ENCODE measurements at regions of chr5 and their contacts with region 1.

Region 1: GRCh38 chr5:150700594-150701293 is at the start of gene RBM22:
- DNase-seq: peak; percentile 95
- total RNA-seq, gene RBM22: 33.8 TPM

Region 2: DNA sequence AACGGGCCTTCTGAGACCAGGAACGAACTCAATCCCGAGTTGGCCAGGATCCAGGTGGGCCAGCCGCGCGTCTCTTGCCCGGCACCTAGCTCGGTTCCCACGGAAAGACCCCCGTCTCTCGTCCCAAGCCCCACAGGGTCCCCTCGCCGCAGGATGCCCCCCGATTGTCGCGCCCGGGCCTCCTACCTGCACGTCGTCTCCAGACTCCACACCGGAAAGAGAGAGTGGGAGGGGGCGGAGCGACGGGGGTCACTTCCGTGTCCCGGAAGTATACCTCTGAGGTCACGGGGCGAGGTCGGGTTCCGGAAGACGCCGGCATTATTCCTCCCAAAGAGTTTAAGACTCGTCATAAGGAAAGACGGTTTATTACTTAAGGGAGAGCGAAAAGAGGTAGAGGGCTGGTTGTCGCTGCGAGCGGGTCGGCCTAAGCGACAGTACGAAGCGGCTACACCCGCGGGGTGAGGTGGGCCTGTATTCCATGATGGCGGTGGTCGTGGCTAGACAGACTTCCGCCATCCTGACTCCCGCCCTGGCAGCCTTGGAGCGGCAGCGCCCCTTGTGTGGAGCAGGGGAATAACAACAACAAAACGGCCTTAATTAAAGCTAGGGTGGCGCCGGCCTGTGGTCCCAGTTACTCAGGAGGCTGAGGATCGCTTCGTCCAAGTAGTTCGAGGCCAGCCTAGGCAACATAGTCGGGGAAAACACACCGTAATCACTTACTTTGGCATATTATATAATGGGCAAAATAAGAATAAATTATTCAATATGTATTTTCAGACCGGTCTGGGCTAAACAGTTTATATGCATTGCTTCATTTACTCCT is 251.0 kb before region 1 on chr5 and contains the start of gene RPS14:
- intact Hi-C with region 1: loop called (anchors 5 kb)
- DNase-seq: peak; percentile 96
- total RNA-seq, gene RPS14: 852 TPM

Region 3: GRCh38 chr5:150560401-150561193 is 140.1 kb before region 1 on chr5:
- intact Hi-C with region 1: loop called (anchors 2 kb)
- DNase-seq: no peak

Region 4: DNA sequence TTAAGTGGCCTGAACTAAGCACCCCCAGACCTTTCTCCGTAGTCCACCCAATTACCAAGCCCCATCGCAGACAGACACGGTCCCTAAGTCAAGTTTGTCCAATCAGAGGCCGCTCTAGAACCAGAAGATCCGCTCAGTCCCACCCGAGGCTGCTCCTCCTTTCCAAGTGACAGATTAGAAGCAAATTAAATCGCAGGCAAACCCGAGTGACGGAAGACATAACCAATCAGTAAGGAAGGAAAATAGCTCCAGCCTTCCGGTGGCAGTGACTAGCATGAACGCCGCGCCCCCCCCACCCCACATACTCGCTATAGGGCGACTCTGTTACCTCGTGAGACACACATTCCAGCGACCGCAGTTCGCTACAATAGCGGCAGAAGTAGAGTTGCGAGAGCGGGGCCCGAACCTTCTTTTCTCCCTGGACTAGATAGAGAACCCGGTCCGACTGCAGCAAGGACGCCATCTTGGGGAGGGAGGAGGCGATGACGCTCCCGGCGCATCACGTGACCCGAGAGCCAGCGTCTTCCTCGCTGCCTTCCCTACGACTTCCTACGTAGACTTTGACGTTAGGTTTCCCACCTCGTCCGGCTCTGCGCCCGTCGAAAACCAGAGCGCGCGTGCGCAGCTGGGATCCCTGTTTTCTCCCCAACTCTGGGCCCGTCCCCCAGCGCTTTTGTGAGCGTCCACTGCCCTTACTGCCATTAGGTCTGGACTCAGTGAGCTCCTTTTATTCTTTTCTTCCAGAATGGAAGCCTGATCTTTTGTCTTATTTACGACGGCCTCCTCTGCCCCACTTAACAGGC is 58.0 kb after region 1 on chr5 and contains the start of gene DCTN4:
- intact Hi-C with region 1: loop called (anchors 5 kb)
- DNase-seq: peak; percentile 98
- total RNA-seq, gene DCTN4: 44.9 TPM

Region 5: DNA sequence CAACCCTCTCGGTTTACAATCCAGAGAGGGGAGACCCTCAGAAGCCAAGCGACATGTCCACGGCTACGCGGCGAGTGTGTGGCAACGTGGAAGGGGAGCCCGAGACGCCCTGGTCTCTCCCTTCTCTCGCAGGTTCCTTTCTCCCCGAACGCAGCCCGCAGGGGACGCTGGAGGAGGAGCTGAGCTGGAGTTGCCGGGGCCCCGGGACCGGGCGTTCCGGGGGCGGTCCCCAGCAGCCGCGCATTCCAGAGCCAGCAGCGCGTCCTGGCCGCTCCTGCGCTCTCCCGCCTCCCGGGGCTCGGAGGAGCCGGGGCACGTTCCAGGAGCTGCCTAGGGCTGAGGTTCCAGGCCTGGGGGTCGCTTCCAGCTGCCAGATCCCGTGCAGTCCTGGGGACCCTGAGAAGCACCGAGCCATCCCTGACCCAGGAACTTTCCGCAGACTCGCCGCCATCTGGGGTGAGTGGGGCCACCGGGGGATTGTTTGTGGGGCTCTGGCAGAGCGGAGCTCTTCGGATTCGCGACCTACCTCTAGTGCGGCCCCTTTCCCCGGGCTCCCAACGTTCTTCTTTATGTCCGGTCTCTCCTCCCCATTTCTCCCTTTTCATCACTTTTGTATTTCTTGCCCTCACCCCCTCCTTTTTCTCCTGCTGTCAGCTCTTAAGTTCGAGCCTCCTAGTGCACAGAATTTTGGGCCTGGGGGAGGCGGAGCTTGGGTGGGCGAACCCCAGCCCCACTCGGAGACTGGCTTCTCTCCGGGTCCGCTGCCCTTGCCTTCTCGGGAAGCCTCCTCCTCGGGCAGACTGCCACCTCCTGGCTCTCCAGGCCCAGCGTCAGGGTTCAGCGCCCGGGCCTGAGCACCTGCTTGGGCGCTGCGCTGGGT is 78.0 kb after region 1 on chr5 and contains the start of gene SMIM3:
- intact Hi-C with region 1: loop called (anchors 2 kb)
- DNase-seq: peak; percentile 93
- total RNA-seq, gene SMIM3: 15.3 TPM

Region 6: DNA sequence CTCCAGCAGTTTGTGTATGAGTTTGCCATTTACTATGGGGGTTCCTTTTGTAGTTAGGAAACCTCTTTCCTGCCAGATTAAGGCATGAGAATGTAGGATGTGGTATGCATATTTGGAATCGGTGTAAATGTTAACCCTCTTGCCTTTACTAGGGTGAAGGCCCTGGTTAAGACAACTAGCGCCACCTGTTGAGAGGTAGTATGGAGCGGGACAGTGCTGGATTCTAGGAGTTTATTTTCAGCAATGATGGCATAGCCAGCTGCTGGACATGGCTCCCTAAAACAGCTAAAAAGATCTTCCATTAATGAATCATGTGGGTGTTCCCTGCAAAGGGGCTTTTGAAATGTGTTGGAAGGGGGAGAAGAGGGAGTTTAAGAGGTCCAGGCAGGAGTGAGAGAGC is 289.0 kb after region 1 on chr5:
- intact Hi-C with region 1: no loop called
- DNase-seq: no peak